H1 (cell line): ENCODE measurements at regions of chr3 and their contacts with region 1.

Region 1: GRCh38 chr3:124552239-124552638 is 178.0 kb upstream of the UMPS start:
- DNase-seq: no peak
- H3K4me3 ChIP-seq: no peak overlapping the region
- H3K27ac ChIP-seq: no peak overlapping the region
- H3K4me1 ChIP-seq: no peaks in the 10 kb centered on the region
- H3K27me3 ChIP-seq: peaks cover 0 to 7% (median 4%) of the 10 kb centered on the region in 4 experiments; a peak in 3 of 7 replicates
- CTCF ChIP-seq: no peak
- EP300 ChIP-seq: no peak
- POLR2A ChIP-seq: no peak
- RAD21 ChIP-seq: no peak

Region 2: GRCh38 chr3:124351430-124352148 is 200.7 kb before region 1 on chr3:
- CTCF ChIA-PET with region 1: interaction called, 24 read pairs
- POLR2A ChIA-PET with region 1: no interaction called
- DNase-seq: no peak
- H3K4me3 ChIP-seq: no peak overlapping the region
- H3K27ac ChIP-seq: no peak overlapping the region
- H3K4me1 ChIP-seq: no peaks in the 10 kb centered on the region
- H3K27me3 ChIP-seq: no peaks in the 10 kb centered on the region
- CTCF ChIP-seq: peak in 2 of 3 experiments; percentile 53 to 83; a peak in 3 of 4 replicates
- EP300 ChIP-seq: 0 out of 3 replicates have a peak, but pooled peaks of 1 of the 2 experiments have one; percentile 45
- POLR2A ChIP-seq: no peak
- RAD21 ChIP-seq: peak; percentile 92 to 93

Region 3: DNA sequence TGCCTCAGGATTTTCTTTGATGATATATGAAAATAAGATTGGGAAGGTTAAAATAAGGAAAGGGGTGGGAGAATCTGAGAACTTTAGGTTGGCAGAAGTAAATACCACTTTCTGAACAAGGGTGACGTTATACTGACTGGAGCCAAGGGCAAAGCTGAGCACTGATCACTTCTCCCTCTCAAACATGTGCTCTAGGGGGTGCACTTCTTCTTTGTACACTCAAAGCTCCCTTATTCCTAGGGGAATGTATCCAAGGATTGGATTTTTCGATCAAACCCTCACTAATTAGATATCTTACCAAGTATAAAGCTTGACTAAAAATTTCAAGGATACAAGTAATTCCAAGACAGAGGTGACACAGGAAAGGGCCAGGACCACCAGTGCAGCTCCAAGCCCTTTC is 65.9 kb before region 1 on chr3:
- CTCF ChIA-PET with region 1: interaction called, 56 read pairs
- POLR2A ChIA-PET with region 1: no interaction called
- DNase-seq: no peak
- H3K4me3 ChIP-seq: no peak overlapping the region
- H3K27ac ChIP-seq: no peak overlapping the region
- H3K4me1 ChIP-seq: no peaks in the 10 kb centered on the region
- H3K27me3 ChIP-seq: no peaks in the 10 kb centered on the region
- CTCF ChIP-seq: peak in 2 of 3 experiments; percentile 31 to 54; a peak in 2 of 4 replicates
- EP300 ChIP-seq: no peak
- POLR2A ChIP-seq: no peak
- RAD21 ChIP-seq: peak; percentile 34 to 56; a peak in 3 of 4 replicates

Region 4: DNA sequence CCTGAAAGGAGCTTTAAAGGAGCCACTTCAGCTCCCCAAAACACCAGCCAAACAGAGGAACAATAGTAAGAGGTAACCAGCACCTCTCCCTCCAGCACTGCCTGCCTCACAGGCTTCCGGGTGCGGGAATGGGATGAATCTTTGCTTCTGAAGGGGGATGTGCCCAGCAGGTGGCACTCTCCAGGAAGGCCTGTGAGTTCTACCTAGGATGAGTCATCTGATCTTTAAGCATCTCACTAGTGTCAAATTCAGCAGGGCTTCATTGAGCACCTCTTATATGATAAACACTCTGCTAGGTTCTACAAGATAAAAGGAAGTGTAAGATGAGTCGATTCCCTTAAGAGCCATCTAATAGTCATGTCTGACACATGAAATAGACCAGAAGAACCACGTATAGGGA is 59.4 kb before region 1 on chr3:
- CTCF ChIA-PET with region 1: interaction called, 56 read pairs
- POLR2A ChIA-PET with region 1: no interaction called
- DNase-seq: peak in 1 of 2 experiments; percentile 49
- H3K4me3 ChIP-seq: no peak overlapping the region
- H3K27ac ChIP-seq: no peak overlapping the region
- H3K4me1 ChIP-seq: no peaks in the 10 kb centered on the region; a peak in 1 of 7 replicates
- H3K27me3 ChIP-seq: no peaks in the 10 kb centered on the region
- CTCF ChIP-seq: peak; percentile 22 to 39 (median 32); a peak in 2 of 4 replicates
- EP300 ChIP-seq: no peak
- POLR2A ChIP-seq: no peak
- RAD21 ChIP-seq: peak in 1 of 2 experiments; percentile 37; a peak in 1 of 4 replicates

Region 5: DNA sequence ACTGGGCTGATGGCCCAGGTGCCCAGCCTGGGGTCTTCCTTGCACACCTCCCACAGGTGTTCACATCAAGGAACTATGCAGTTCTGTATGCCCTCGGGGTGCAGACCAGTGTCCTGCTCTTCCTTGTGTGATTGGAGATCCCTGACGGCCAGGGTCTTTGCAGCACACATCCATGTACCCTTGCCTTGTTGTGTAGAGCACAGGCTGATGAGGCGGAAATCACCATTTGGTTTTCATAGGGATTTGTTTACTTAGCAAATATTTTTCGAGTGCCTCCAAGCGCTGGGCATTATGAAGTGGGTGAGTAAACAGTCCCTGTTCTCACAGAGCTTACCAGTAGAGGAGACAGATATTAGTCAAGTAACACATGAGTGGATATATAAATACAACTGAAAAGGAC is 31.3 kb before region 1 on chr3:
- CTCF ChIA-PET with region 1: interaction called, 16 read pairs
- POLR2A ChIA-PET with region 1: interaction called, 3 read pairs
- DNase-seq: no peak
- H3K4me3 ChIP-seq: no peak overlapping the region
- H3K27ac ChIP-seq: no peak overlapping the region
- H3K4me1 ChIP-seq: peaks cover 0 to 7% (median 3%) of the 10 kb centered on the region in 4 experiments; a peak in 3 of 7 replicates
- H3K27me3 ChIP-seq: no peaks in the 10 kb centered on the region
- CTCF ChIP-seq: no peak
- EP300 ChIP-seq: no peak
- POLR2A ChIP-seq: no peak
- RAD21 ChIP-seq: no peak

Region 6: DNA sequence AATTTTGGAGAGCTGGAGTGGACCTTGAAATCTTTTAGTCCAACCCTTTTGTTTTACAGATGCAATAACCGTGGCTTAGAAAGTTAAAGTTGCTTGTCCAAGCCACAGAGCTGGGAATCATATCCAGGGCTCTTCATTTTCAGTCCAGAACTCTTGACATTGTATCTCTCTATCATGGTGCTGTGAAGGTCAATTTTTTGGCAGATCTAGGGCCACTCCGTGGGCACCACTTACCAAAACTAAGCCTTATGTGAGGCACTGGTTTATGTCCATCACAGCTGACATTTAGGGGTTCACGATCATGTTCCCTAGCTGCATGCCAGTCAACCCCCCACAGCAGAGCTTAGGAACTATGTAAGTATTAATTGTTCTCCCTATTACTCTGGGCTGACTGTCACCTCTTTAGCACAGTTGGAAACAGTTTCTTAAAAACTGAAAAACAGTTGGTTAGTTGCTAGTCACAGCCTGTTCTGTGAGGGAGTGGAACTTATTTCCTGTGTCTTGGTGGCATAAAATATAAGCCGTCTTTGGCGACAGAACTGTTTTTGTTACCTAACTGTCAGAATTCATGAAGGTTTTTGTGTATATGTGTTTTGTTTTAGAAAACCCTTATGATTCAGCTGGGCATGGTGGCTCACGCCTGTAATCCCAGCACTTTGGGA is 11.6 kb before region 1 on chr3:
- CTCF ChIA-PET with region 1: interaction called, 73 read pairs
- POLR2A ChIA-PET with region 1: no interaction called
- DNase-seq: no peak
- H3K4me3 ChIP-seq: no peak overlapping the region
- H3K27ac ChIP-seq: no peak overlapping the region
- H3K4me1 ChIP-seq: peaks cover 0 to 3% (median under 1%) of the 10 kb centered on the region in 4 experiments; a peak in 2 of 7 replicates
- H3K27me3 ChIP-seq: no peaks in the 10 kb centered on the region
- CTCF ChIP-seq: no peak
- EP300 ChIP-seq: no peak
- POLR2A ChIP-seq: no peak
- RAD21 ChIP-seq: no peak

Region 7: GRCh38 chr3:124768812-124769211 is 216.6 kb after region 1 on chr3:
- CTCF ChIA-PET with region 1: no interaction called
- POLR2A ChIA-PET with region 1: no interaction called
- DNase-seq: no peak
- H3K4me3 ChIP-seq: no peak overlapping the region
- H3K27ac ChIP-seq: no peak overlapping the region
- H3K4me1 ChIP-seq: peaks cover 0 to 3% (median 2%) of the 10 kb centered on the region in 4 experiments; a peak in 4 of 7 replicates
- H3K27me3 ChIP-seq: no peaks in the 10 kb centered on the region; a peak in 1 of 7 replicates
- CTCF ChIP-seq: peak; percentile 32 to 48 (median 45)
- EP300 ChIP-seq: no peak
- POLR2A ChIP-seq: no peak
- RAD21 ChIP-seq: peak; percentile 27 to 43; a peak in 3 of 4 replicates